ENCODE measurements at regions of chr11 and their contacts with region 1.

Region 1: DNA sequence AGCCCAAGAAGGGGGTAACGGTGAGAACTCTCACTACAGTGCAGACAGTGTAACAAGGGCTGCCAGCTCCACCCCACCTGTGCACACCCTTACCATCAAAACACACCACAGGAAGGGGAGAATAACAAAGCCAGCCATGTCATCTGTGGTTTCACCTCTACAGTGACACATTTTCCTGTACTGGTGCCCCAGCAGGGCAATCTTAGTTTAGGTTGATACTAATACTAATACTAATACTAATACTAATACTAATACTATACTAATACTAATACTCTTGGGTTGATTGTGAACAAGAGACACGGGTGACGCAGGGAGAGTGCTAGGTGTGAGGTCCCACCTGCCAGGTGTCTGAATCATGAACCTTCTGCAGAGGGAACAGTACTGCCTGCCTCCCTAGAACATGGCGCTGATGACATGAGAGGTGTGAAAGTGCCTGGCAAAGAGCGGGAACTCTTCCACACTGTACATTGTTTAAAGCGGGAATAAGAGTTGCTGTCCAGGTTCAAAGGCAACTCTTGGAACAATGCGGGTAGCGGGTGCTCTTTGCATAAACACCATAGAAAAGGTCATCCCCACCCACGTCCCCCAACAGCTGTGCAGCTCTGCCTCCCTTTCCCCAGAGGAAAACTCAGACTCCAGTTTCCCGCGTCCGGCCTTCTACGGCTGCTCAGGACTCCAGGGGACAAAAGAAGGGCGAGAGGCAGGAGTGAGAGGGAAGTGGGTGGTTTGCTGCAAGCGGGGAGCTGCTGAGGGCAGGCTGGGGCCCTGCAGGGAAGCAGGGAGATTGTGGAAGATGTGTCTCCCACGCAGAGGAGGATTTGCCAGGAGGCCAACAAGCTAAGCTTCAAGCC is 25.0 kb upstream of the TMPRSS4 start:
- DNase-seq: peak; percentile 84
- H3K4me3 Mint-ChIP-seq: no peak overlapping the region
- H3K27ac Mint-ChIP-seq: peak overlapping the region; percentile 61
- H3K4me1 Mint-ChIP-seq: peaks cover 52% of the 10 kb centered on the region
- H3K27me3 Mint-ChIP-seq: no peaks in the 10 kb centered on the region

Region 2: DNA sequence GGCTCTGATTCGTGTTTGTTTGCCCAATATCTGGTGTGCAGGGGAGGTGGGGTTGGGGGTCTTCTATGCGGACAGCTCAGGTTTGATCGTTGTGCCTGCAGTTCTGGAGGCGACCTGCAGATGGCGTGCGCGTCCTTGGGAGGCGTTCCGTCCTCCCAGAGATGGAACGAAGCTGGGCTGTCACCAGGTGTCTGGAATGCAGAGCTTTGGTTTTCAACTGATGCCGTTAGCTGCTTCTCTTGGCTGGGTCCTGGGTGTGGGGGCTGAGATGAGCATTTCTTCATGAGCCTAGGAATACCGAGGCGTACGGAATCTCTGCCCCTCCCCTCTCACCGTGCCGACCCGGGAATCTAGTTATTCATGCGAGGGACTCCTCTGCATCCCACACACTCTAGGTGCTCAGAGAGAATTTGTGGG is 625.6 kb before region 1 on chr11:
- CTCF ChIA-PET with region 1: interaction called, 11 read pairs
- intact Hi-C with region 1: loop called (anchors 10 kb)
- DNase-seq: peak; percentile 84
- H3K4me3 Mint-ChIP-seq: no peak overlapping the region
- H3K27ac Mint-ChIP-seq: no peak overlapping the region
- H3K4me1 Mint-ChIP-seq: no peaks in the 10 kb centered on the region
- H3K27me3 Mint-ChIP-seq: peaks cover 4% of the 10 kb centered on the region

Region 3: GRCh38 chr11:117828611-117829368 is 223.0 kb before region 1 on chr11:
- CTCF ChIA-PET with region 1: interaction called, 30 read pairs
- intact Hi-C with region 1: loop called (anchors 1 kb)
- DNase-seq: peak; percentile 92
- H3K4me3 Mint-ChIP-seq: no peak overlapping the region
- H3K27ac Mint-ChIP-seq: peak overlapping the region; percentile 46
- H3K4me1 Mint-ChIP-seq: peaks cover 50% of the 10 kb centered on the region
- H3K27me3 Mint-ChIP-seq: no peaks in the 10 kb centered on the region

Region 4: GRCh38 chr11:117919781-117920221 is 132.0 kb before region 1 on chr11:
- CTCF ChIA-PET with region 1: interaction called, 12 read pairs
- intact Hi-C with region 1: no loop called
- DNase-seq: peak; percentile 45
- H3K4me3 Mint-ChIP-seq: no peak overlapping the region
- H3K27ac Mint-ChIP-seq: no peak overlapping the region
- H3K4me1 Mint-ChIP-seq: peaks cover 8% of the 10 kb centered on the region
- H3K27me3 Mint-ChIP-seq: no peaks in the 10 kb centered on the region

Region 5: GRCh38 chr11:117979481-117980211 is 72.2 kb before region 1 on chr11:
- CTCF ChIA-PET with region 1: interaction called, 14 read pairs
- intact Hi-C with region 1: no loop called
- DNase-seq: peak; percentile 53
- H3K4me3 Mint-ChIP-seq: no peak overlapping the region
- H3K27ac Mint-ChIP-seq: peak overlapping the region; percentile 16
- H3K4me1 Mint-ChIP-seq: peaks cover 54% of the 10 kb centered on the region
- H3K27me3 Mint-ChIP-seq: no peaks in the 10 kb centered on the region

Region 6: DNA sequence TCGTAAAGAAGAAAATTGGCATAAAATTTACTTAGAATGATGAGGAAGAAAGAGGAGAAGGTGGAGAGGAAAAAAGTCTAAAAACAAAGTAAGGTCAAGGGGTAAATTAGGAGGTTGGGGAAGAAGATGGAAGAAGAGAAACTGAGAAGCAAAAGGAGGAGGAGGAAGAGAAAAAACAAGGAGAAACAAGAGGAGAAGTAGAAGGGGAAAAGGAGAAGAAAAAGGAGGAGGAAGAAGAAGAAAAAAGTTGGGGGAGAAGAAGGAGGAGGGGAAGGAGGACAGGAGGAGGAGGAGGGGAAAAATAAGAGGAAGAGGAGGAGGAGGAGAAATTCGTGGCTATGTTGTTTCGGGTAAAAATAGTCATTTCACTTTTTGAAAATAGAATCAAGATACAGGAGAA is 23.2 kb before region 1 on chr11:
- CTCF ChIA-PET with region 1: interaction called, 3 read pairs
- intact Hi-C with region 1: loop called (anchors 1 kb)
- DNase-seq: no peak
- H3K4me3 Mint-ChIP-seq: no peak overlapping the region
- H3K27ac Mint-ChIP-seq: no peak overlapping the region
- H3K4me1 Mint-ChIP-seq: peaks cover 7% of the 10 kb centered on the region
- H3K27me3 Mint-ChIP-seq: no peaks in the 10 kb centered on the region

Measured in activated naive CD4-positive, alpha-beta T cell treated with anti-CD3 and anti-CD28 coated beads for 36 hours (primary cell).